K562 (cell line): ENCODE measurements at regions of chr11 and their contacts with region 1.

Region 1: GRCh38 chr11:46601129-46601528 is 7.3 kb upstream of the AMBRA1 start:
- DNase-seq: no peak
- ATAC-seq: no peak
- H3K4me3 ChIP-seq: no peak overlapping the region
- H3K27ac ChIP-seq: no peak overlapping the region
- H3K4me1 ChIP-seq: peaks cover 5 to 10% of the 10 kb centered on the region in 2 experiments; a peak in 3 of 5 replicates
- H3K27me3 ChIP-seq: no peaks in the 10 kb centered on the region
- CTCF ChIP-seq: no peak
- EP300 ChIP-seq: no peak
- POLR2A ChIP-seq: no peak
- RAD21 ChIP-seq: no peak

Region 2: DNA sequence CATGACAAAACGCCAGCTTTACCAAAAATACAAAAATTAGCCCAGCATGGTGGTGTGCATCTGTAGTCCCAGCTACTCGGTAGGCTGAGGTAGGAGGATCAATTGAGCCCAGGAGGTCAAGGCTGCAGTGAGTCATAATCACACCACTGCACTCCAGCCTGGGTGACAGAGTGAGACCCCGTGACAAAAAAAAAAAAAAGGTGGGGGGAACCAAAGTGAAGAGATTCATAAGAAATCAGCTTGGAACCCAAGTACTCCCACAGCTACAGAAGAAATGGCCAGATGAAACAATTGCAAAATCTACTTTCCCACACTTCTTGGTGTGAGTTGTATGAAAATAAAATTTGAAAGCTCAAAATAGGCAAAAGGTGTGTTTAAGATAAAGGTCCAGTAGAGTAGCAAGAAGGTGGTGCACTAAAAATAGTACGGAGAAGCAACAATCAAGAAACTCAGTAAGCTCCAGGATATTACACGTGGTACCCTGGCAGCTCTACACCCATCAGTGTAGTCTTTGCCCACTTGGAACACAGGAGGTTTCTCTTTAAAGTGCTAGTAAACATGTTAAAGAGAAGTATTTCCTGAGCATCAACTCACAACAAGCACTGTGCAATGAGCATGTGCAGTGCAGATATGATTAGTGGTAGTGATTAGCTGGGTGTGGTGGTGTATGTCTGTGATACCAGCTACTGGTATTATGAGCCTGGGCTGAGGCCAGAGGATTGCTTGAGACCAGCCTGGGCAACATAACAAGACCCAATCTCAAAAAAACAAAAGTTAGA is 10.6 kb after region 1 on chr11:
- CTCF ChIA-PET with region 1: no interaction called
- POLR2A ChIA-PET with region 1: interaction called, 15 read pairs
- in situ Hi-C with region 1: no loop called
- intact Hi-C with region 1: loop called (anchors 2 kb)
- DNase-seq: peak in 2 of 4 experiments; percentile 51 to 64
- ATAC-seq: peak; percentile 71
- H3K4me3 ChIP-seq: no peak overlapping the region
- H3K27ac ChIP-seq: peak overlapping the region; percentile 21; the same call in 2 of the 3 replicates
- H3K4me1 ChIP-seq: peaks cover 25 to 27% of the 10 kb centered on the region in 2 experiments; a peak in 4 of 5 replicates
- H3K27me3 ChIP-seq: no peaks in the 10 kb centered on the region
- CTCF ChIP-seq: no peak
- EP300 ChIP-seq: peak; percentile 67; the same call in 1 of the 2 replicates
- POLR2A ChIP-seq: no peak
- RAD21 ChIP-seq: no peak

Region 3: GRCh38 chr11:46669711-46670139 is 68.6 kb after region 1 on chr11:
- CTCF ChIA-PET with region 1: no interaction called
- POLR2A ChIA-PET with region 1: no interaction called
- in situ Hi-C with region 1: no loop called
- intact Hi-C with region 1: no loop called
- DNase-seq: peak in 2 of 4 experiments; percentile 30 to 49
- ATAC-seq: peak; percentile 75
- H3K4me3 ChIP-seq: no peak overlapping the region
- H3K27ac ChIP-seq: no peak overlapping the region
- H3K4me1 ChIP-seq: peaks cover under 1 to 5% of the 10 kb centered on the region in 2 experiments; a peak in 4 of 5 replicates
- H3K27me3 ChIP-seq: no peaks in the 10 kb centered on the region
- CTCF ChIP-seq: peak; percentile 42 to 61 (median 51)
- EP300 ChIP-seq: no peak
- POLR2A ChIP-seq: no peak
- RAD21 ChIP-seq: peak in 1 of 2 experiments; percentile 13; a peak in 1 of 4 replicates

Region 4: DNA sequence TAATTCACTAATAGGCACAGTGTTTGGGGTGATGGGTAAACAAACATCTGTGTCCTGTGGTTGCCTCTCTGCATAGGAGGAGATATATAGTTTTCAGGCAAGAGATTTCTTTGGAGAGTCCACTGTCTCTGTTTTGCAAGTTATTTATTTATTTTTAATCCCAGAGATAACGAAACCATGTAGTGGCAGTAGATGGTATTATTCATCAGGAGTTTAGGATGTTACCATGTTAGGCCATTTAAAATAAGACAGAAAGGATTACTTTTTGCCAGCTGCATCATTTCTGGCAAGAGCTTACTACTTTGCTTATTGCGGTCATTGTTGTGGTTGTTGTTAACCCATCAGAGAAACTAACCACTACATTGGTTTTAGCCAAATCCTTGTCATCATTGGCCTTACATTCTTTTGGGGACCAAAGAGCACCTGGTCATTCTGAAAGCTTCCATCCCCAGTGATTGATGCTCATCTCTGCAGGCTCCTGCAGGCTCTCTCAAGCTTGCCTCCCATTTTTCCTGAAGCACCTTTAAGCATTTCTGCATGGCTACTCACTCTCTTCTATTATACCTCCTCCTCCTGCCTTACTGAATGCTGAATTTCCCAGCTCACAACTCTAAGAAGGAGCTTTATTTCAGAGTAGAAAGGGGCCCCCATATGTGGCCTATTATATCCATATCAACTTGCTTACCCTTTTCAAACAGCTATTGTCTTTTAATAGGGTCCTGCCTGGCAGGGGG is 419.8 kb after region 1 on chr11:
- CTCF ChIA-PET with region 1: no interaction called
- POLR2A ChIA-PET with region 1: no interaction called
- in situ Hi-C with region 1: no loop called
- intact Hi-C with region 1: no loop called
- DNase-seq: no peak
- ATAC-seq: no peak
- H3K4me3 ChIP-seq: no peak overlapping the region
- H3K27ac ChIP-seq: no peak overlapping the region
- H3K4me1 ChIP-seq: no peaks in the 10 kb centered on the region
- H3K27me3 ChIP-seq: no peaks in the 10 kb centered on the region
- CTCF ChIP-seq: no peak
- EP300 ChIP-seq: no peak
- POLR2A ChIP-seq: no peak
- RAD21 ChIP-seq: no peak